Adrenal gland (tissue), 19 donors: ENCODE measurements at regions of chr6 and their contacts with region 1.

Region 1: DNA sequence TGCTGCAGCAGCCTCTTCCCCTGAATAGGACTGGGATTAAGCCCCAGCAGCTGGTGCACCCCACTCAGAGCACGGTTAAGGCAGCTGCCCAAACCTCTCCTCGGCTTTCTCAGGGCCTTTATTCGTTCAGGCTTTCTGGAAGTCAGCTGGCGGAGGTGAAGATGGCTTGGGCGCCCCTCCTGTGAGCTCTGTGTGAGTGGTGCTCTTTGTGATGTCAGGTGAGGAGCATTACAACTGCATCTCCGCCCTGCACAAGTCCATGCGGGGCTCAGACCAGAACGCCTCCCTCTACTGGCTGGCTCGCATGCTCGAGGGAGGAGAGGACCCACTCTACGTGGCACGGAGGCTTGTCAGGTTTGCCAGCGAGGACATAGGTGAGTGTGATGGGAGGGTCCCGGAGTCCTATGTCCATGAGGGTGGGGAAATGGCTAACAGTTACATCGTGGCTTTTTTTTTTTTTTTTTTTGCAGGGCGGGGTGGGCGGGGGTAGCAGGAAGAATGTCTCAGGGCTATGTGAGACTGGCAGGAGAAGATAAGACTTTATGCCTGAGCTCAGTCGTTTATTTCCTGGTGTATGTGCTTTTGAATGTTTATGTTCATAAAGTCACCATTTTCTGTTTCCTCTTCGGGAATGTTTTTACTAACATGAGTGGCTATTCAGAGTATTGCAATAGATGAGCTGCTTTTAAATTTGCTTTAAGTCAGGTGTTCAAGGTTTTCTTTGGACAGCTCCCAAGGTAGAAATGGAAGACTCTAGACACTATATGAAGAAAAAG is 18.2 kb downstream of the WRNIP1 start:
- DNase-seq: peak in 1 of 7 donors; percentile 13
- H3K4me3 ChIP-seq: no peak overlapping the region
- H3K27ac ChIP-seq: no peak overlapping the region
- H3K4me1 ChIP-seq: no peaks in the 10 kb centered on the region
- H3K27me3 ChIP-seq: no peaks in the 10 kb centered on the region
- CTCF ChIP-seq: no peak
- POLR2A ChIP-seq: no peak

Region 2: GRCh38 chr6:2911171-2911570 is 127.8 kb after region 1 on chr6:
- intact Hi-C with region 1: loop called in 1 of 2 experiments (anchors 10 kb)
- DNase-seq: no peak
- H3K4me3 ChIP-seq: no peak overlapping the region
- H3K27ac ChIP-seq: no peak overlapping the region
- H3K4me1 ChIP-seq: no peaks in the 10 kb centered on the region
- H3K27me3 ChIP-seq: no peaks in the 10 kb centered on the region
- CTCF ChIP-seq: no peak
- POLR2A ChIP-seq: no peak

Region 3: DNA sequence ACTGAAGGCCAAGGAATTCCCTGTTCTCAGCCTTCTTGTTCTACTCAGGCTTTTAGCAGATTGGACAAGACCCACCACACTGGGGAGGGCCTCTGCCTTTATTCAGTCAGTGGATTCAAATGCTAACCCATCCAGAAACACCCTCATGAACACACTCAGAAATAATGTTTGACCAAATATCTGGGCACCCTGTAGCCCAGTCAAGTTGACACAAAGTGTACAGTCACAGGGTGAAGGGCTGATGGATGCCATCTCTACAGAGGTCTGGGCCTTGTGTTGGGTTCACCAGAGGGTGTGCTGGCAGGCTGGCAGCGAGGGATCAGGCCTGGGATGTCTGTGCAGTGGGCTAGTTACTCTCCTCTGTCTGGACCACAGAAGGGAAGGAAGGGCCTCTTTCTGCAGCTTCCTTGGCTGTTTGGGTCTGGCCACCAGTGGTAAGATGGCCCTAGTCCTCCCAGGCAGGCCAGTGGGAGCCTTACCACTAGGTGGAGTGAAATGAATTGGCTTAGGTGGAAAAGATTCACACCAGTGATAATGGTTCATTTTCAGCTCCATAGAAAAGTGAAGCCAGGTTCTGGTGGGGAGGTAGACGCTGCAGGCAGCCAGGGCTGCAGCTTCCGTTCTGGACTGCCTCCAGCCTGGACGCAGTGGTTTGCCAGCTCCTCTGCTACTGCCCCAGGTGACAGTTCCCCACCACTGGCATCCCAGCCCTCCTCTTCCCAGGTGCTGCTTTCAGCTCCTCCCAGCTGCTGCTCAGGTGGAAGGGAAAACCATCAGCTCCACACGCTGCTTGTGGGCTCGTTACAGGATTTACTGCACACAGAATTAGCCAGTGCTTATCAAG is 364.8 kb after region 1 on chr6:
- intact Hi-C with region 1: no loop called
- DNase-seq: no peak
- H3K4me3 ChIP-seq: no peak overlapping the region
- H3K27ac ChIP-seq: no peak overlapping the region
- H3K4me1 ChIP-seq: no peaks in the 10 kb centered on the region
- H3K27me3 ChIP-seq: no peaks in the 10 kb centered on the region
- CTCF ChIP-seq: no peak
- POLR2A ChIP-seq: no peak